ENCODE measurements at regions of chr2 and their contacts with region 1.

Region 1: GRCh38 chr2:54161660-54162424 is 46.4 kb downstream of the ACYP2 start:
- DNase-seq: no peak
- H3K4me3 ChIP-seq: no peak overlapping the region
- H3K27ac ChIP-seq: no peak overlapping the region
- H3K4me1 ChIP-seq: no peaks in the 10 kb centered on the region
- H3K27me3 ChIP-seq: no peaks in the 10 kb centered on the region
- CTCF ChIP-seq: peak in 2 of 3 experiments; percentile 16 to 25

Region 2: GRCh38 chr2:54704688-54705605 is 543.1 kb after region 1 on chr2:
- intact Hi-C with region 1: loop called (anchors 10 kb)
- DNase-seq: no peak
- H3K4me3 ChIP-seq: no peak overlapping the region
- H3K27ac ChIP-seq: no peak overlapping the region
- H3K4me1 ChIP-seq: peaks cover 0 to 7% of the 10 kb centered on the region in 2 donors
- H3K27me3 ChIP-seq: no peaks in the 10 kb centered on the region
- CTCF ChIP-seq: peak; percentile 52 to 66 (median 58)

Measured in ascending aorta (tissue), 2 donors.